Endothelial cell of umbilical vein (primary cell): ENCODE measurements at regions of chr1 and their contacts with region 1.

Region 1: GRCh38 chr1:214328770-214329469 is 48.0 kb downstream of the SMYD2 start:
- DNase-seq: peak; percentile 77
- H3K4me3 ChIP-seq: no peak overlapping the region
- H3K27ac ChIP-seq: no peak overlapping the region
- H3K4me1 ChIP-seq: peaks cover 9% of the 10 kb centered on the region
- H3K27me3 ChIP-seq: no peaks in the 10 kb centered on the region
- CTCF ChIP-seq: peak; percentile 84 to 92
- POLR2A ChIP-seq: no peak

Region 2: GRCh38 chr1:213244664-213245091 is 1084.2 kb before region 1 on chr1:
- CTCF ChIA-PET with region 1: interaction called, 25 read pairs
- POLR2A ChIA-PET with region 1: no interaction called
- dilution Hi-C with region 1: no loop called
- intact Hi-C with region 1: loop called (anchors 1 kb)
- DNase-seq: peak; percentile 68
- H3K4me3 ChIP-seq: no peak overlapping the region
- H3K27ac ChIP-seq: no peak overlapping the region
- H3K4me1 ChIP-seq: no peaks in the 10 kb centered on the region
- H3K27me3 ChIP-seq: no peaks in the 10 kb centered on the region
- CTCF ChIP-seq: peak; percentile 56 to 57
- POLR2A ChIP-seq: no peak

Region 3: DNA sequence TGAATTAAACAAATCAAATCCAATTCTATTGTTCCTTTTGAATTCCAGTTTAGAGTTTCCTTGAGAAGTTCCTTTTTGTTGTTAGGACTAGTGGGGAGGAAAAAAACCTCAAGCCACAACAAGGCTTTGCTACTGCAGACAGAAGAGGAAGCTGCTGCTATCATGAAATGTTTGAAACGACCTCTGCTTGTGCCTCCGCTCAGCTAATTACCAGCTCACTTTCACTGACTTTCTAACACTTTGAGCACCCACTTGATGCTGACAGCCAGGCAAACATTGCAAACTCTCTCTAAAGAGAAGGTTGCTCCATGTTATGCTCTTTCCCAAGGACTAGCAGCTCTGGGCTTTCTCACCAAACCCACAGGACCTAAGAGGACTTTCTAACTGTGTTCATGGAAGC is 545.0 kb before region 1 on chr1:
- CTCF ChIA-PET with region 1: no interaction called
- POLR2A ChIA-PET with region 1: no interaction called
- dilution Hi-C with region 1: no loop called
- intact Hi-C with region 1: no loop called
- DNase-seq: no peak
- H3K4me3 ChIP-seq: no peak overlapping the region
- H3K27ac ChIP-seq: no peak overlapping the region
- H3K4me1 ChIP-seq: no peaks in the 10 kb centered on the region
- H3K27me3 ChIP-seq: no peaks in the 10 kb centered on the region
- CTCF ChIP-seq: no peak
- POLR2A ChIP-seq: no peak

Region 4: DNA sequence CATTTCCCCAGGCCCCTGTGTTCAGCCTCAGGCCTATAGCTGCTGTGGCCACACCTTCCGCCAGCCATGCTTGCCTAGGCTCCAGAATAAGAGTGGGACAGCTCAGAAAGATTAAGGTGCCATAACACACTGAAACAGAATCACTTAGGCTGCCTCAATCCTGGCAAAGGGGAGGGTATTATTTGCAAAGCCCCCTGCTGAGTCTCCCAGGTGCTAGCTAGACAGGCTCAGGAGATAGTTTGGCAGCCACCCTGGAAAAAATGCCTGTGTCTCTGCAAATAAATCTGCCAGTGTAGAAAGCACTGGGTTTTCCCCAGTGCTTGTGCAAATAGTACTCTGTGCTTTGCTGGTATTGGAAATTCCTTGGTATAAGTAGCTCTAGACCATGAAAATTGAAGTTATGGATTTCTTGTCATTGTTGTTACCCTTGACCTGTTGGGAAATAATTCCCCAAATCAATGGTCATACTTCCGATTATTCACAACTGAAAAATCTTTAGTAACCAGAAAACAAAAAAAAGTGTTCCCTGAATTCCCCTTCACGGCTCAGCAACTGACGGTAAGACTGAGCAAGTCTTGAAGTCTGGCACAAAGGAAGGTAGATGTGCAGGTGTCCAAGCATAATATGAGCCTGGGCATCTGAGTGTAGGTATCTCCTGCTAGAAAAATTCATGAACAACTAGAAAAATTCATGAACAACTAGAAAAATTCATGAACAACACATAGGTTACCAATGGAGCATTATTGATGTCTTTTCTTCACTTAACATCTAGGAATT is 284.3 kb before region 1 on chr1:
- CTCF ChIA-PET with region 1: no interaction called
- POLR2A ChIA-PET with region 1: no interaction called
- dilution Hi-C with region 1: no loop called
- intact Hi-C with region 1: no loop called
- DNase-seq: no peak
- H3K4me3 ChIP-seq: no peak overlapping the region
- H3K27ac ChIP-seq: no peak overlapping the region
- H3K4me1 ChIP-seq: no peaks in the 10 kb centered on the region
- H3K27me3 ChIP-seq: no peaks in the 10 kb centered on the region
- CTCF ChIP-seq: no peak
- POLR2A ChIP-seq: no peak

Region 5: GRCh38 chr1:214213136-214213535 is 115.8 kb before region 1 on chr1:
- CTCF ChIA-PET with region 1: interaction called, 671 read pairs
- POLR2A ChIA-PET with region 1: interaction called, 8 read pairs
- dilution Hi-C with region 1: no loop called
- intact Hi-C with region 1: loop called (anchors 1 kb)
- DNase-seq: no peak
- H3K4me3 ChIP-seq: no peak overlapping the region
- H3K27ac ChIP-seq: no peak overlapping the region
- H3K4me1 ChIP-seq: peaks cover 7% of the 10 kb centered on the region
- H3K27me3 ChIP-seq: peaks cover 6 to 16% of the 10 kb centered on the region in 2 experiments
- CTCF ChIP-seq: no peak
- POLR2A ChIP-seq: no peak

Region 6: DNA sequence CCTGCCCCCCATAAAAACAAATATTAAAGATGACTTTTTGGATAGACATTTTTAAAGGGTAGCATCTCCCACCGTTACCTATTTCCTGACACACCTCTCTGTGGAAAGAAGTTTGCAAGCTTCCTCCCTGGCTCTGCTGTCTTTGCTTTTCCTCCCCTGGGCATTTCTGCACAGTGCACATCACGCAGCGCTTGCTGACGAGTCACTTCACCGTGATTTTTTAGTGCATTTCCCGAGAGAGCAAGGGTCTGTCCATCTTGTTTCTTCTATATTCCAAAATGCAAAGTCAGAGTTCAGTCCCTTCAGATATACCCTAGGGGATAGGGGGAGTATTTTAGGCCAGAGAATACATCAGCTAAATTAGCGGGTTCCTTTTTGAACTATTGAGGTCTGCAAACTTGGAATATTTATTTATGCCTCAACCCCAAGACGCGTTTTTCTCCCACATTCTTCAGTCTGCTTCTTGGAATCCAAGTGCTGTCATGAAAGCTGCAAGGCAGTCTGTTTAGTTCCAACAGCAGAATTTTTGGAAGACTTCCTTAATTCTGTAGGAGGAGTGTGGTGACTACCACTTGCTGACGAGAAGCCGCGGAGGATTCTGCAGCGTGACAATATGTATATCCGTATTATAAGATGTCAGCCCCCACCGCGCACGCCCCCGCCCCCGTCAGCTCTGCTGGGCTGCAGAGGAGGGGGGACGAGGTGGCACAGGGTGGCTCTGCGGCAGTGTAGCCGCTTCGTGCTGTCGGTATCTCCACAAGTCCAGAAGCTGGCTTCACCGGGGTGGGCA is 25.6 kb before region 1 on chr1:
- CTCF ChIA-PET with region 1: interaction called, 17 read pairs
- POLR2A ChIA-PET with region 1: no interaction called
- dilution Hi-C with region 1: no loop called
- intact Hi-C with region 1: no loop called
- DNase-seq: no peak
- H3K4me3 ChIP-seq: no peak overlapping the region
- H3K27ac ChIP-seq: no peak overlapping the region
- H3K4me1 ChIP-seq: no peaks in the 10 kb centered on the region
- H3K27me3 ChIP-seq: no peaks in the 10 kb centered on the region
- CTCF ChIP-seq: no peak
- POLR2A ChIP-seq: no peak

Region 7: GRCh38 chr1:214551436-214552173 is 222.7 kb after region 1 on chr1 and contains the start of gene PTPN14:
- CTCF ChIA-PET with region 1: interaction called, 36 read pairs
- POLR2A ChIA-PET with region 1: no interaction called
- dilution Hi-C with region 1: no loop called
- intact Hi-C with region 1: loop called (anchors 1 kb)
- DNase-seq: peak; percentile 93
- H3K4me3 ChIP-seq: peak within 1 kb of the TSS; percentile 31 to 88 (median 73)
- H3K27ac ChIP-seq: peak within 1 kb of the TSS; percentile 98
- H3K4me1 ChIP-seq: peaks cover 50% of the 10 kb centered on the region
- H3K27me3 ChIP-seq: no peaks in the 10 kb centered on the region
- CTCF ChIP-seq: peak; percentile 17 to 47
- POLR2A ChIP-seq: peak; percentile 97
- total RNA-seq, gene PTPN14: 88.9 and 93.0 TPM in 2 replicates

Region 8: DNA sequence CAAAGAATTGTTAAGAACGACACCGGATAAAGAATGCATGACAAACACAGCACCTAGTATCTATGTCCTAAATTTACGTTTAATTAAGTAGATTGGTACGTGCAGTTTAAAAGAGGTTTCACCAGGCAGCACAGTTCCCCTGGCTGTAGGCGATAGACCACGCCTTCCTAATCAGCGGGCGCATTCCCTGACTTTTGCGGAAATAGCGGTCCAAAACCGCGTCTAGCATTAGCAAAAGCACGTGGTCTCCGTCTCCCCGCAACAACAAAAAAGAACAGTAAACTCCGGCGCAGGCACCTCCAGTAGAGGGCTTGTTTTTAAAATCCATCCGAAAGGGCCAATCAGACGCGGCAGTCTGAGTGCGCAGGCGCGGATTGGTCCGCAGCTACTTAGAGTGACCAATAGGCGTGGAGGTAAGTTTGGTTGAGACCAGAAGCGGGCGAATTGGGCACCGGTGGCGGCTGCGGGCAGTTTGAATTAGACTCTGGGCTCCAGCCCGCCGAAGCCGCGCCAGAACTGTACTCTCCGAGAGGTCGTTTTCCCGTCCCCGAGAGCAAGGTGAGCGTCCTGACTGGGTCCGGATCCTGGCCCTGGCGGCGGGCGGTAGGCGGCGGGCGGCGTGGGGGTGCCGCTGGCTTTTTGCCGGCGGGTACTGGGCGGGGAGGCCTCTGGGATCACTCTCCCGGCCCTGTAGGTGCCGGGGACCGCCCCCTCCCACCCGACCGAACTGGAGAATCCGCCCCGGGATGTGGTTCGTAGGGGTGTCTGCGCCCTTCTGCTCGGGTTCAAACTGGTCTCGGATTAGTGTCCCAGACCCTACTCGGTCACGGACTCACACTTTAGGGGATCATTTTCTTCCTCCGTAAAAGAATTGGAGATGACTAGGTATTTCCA is 274.1 kb after region 1 on chr1 and contains the start of gene CENPF:
- CTCF ChIA-PET with region 1: interaction called, 25 read pairs
- POLR2A ChIA-PET with region 1: interaction called, 3 read pairs
- dilution Hi-C with region 1: loop called (anchors 25 kb)
- intact Hi-C with region 1: loop called (anchors 1 kb)
- DNase-seq: peak; percentile 99
- H3K4me3 ChIP-seq: peak within 1 kb of the TSS; percentile 80 to 93 (median 80)
- H3K27ac ChIP-seq: peak within 1 kb of the TSS; percentile 56
- H3K4me1 ChIP-seq: peaks cover 11% of the 10 kb centered on the region
- H3K27me3 ChIP-seq: no peaks in the 10 kb centered on the region
- CTCF ChIP-seq: peak in 1 of 2 donors; percentile 30
- POLR2A ChIP-seq: peak; percentile 59
- total RNA-seq, gene CENPF: 66.2 and 72.9 TPM in 2 replicates